ENCODE measurements at regions of chr2 and their contacts with region 1.

Region 1: DNA sequence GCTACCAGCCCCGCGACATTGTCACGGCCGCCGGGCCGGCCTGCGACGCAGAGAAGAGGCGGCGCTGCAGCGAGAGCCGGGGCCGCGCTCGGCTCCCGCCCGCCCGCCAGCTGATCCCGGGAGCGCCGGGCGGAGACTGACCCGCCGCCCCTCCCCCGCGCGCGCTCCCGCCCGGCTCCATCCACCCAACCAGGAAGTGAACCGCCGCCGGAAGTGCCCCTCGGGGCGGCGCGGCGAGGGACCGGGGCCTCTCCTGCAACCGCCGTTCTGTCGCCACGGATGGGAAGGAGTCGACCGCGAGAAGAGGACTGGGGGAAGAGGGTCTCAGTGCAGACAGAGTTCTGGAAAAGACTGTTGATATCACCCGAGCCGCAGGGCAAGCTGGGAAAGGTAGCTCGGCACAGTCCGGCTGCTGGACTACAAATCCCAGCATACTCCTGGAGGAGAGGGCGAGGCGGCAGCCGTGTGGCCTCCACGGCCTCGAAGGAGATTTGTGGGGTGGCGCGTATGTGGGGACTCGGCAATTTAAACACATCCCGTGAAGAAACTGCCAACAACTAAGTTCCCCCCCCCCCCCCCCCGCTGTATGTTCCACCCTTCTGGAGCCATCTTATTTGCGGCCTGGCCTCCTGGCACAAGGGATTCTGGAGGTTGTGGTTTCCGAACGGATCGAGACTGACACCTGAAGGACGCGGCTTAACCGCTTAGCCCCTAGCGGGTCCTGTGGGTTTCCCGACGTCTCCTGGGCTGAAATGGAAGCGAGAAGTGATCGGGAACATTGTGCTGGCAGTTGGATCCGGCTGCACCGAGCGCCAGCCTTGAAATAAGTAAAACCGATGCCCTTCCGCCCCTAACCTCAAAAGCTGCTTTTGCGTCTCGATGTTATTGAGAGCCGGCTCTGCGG is at the start of gene AAK1:
- DNase-seq: peak; percentile 93 to 95 (median 94)
- ATAC-seq: peak; percentile 80 to 95 (median 92)
- H3K4me3 ChIP-seq: peak within 1 kb of the TSS; percentile 70 to 99 (median 95)
- H3K27ac ChIP-seq: peak within 1 kb of the TSS; percentile 93 to 99 (median 98)
- H3K4me1 ChIP-seq: peaks cover 0 to 71% (median 40%) of the 10 kb centered on the region in 12 donors
- H3K27me3 ChIP-seq: no peaks in the 10 kb centered on the region
- CTCF ChIP-seq: peak in 1 of 12 donors; percentile 7
- POLR2A ChIP-seq: peak in 1 of 2 donors; percentile 85
- total RNA-seq, gene AAK1: 68.7 to 167 (median 131) TPM

Region 2: DNA sequence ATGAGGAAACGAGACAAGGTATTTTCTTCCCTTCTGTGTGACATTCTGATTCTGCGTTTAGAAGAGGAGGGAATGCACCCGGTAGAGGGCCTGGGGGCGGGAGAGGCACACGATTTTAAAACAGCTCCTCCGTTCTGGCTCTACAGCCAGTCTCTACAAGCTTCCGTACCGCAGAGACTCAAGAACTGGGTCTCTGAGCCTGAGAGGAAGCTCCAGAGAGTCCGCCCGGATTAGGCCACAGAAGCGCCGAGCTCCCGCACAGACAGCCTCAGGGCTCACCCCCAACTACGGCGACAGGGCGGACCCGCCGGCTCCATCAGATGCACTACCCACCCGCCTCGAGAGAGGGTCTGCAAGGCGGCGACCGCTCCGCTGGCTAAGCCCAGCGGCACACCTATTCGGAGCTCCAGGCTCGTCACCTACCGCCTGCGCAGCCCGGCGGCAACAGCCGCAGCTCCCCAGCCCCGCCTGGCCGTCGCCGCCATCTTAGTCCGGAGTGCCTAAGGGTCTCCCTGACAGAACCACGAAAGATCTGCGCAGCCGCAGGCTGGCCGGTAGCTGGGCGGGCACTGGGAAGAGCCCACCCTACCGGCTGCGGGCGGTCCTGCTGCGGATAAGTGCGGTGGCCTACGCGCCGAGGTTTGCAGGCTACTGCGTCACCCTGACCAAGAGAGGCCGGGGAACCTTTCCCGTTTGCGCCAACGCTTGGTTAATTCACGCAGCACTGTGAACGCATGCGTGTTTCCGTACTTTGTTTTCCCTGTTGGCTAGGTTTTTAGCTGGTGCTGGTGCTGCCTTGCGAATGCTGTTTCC is 206.7 kb before region 1 on chr2 and contains the start of gene NFU1:
- intact Hi-C with region 1: loop called in 1 of 10 experiments (anchors 5 kb)
- DNase-seq: peak; percentile 94 to 97 (median 96)
- ATAC-seq: peak; percentile 97 to 99 (median 98)
- H3K4me3 ChIP-seq: peak within 1 kb of the TSS; percentile 70 to 97 (median 84)
- H3K27ac ChIP-seq: peak within 1 kb of the TSS; percentile 84 to 99 (median 96)
- H3K4me1 ChIP-seq: peaks cover 5 to 37% (median 21%) of the 10 kb centered on the region in 12 donors
- H3K27me3 ChIP-seq: no peaks in the 10 kb centered on the region
- CTCF ChIP-seq: peak; percentile 62 to 82 (median 75)
- POLR2A ChIP-seq: peak in 1 of 2 donors; percentile 84
- total RNA-seq, gene NFU1: 76.6 to 144 (median 110) TPM

Region 3: GRCh38 chr2:69565431-69565839 is 78.4 kb before region 1 on chr2:
- intact Hi-C with region 1: loop called in 8 of 10 experiments (anchors 2 to 10 kb)
- DNase-seq: peak; percentile 30 to 71 (median 44)
- ATAC-seq: peak in 3 of 4 donors; percentile 14 to 66 (median 35)
- H3K4me3 ChIP-seq: no peak overlapping the region
- H3K27ac ChIP-seq: peak overlapping the region in 1 of 12 donors; percentile 47
- H3K4me1 ChIP-seq: peaks cover 2 to 86% (median 50%) of the 10 kb centered on the region in 12 donors
- H3K27me3 ChIP-seq: no peaks in the 10 kb centered on the region
- CTCF ChIP-seq: peak; percentile 55 to 84 (median 72)
- POLR2A ChIP-seq: no peak

Region 4: DNA sequence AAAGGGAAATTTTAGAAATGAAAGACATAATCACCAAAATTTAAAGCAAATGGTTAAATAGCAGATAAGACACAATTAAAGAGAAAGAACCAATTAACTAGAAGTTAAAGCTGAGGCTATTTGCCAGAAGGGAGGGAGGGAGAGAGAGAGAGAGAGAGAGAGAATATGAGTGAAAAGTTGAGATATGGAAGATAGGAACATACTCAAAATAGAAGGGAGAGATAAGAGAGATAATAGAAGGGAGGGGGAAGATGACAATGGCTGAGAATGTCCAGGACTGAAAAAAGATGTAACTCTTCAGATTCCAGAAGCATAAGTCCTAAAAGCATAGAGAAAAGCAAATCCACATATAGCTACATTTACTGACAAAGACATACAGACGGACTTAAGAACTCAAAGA is 16.8 kb after region 1 on chr2:
- intact Hi-C with region 1: loop called in 1 of 10 experiments (anchors 2 kb)
- DNase-seq: no peak
- ATAC-seq: no peak
- H3K4me3 ChIP-seq: no peak overlapping the region
- H3K27ac ChIP-seq: peak overlapping the region in 7 of 12 donors; percentile 5 to 59 (median 37)
- H3K4me1 ChIP-seq: peaks cover 0 to 21% (median 7%) of the 10 kb centered on the region in 12 donors
- H3K27me3 ChIP-seq: no peaks in the 10 kb centered on the region
- CTCF ChIP-seq: no peak
- POLR2A ChIP-seq: no peak

Region 5: DNA sequence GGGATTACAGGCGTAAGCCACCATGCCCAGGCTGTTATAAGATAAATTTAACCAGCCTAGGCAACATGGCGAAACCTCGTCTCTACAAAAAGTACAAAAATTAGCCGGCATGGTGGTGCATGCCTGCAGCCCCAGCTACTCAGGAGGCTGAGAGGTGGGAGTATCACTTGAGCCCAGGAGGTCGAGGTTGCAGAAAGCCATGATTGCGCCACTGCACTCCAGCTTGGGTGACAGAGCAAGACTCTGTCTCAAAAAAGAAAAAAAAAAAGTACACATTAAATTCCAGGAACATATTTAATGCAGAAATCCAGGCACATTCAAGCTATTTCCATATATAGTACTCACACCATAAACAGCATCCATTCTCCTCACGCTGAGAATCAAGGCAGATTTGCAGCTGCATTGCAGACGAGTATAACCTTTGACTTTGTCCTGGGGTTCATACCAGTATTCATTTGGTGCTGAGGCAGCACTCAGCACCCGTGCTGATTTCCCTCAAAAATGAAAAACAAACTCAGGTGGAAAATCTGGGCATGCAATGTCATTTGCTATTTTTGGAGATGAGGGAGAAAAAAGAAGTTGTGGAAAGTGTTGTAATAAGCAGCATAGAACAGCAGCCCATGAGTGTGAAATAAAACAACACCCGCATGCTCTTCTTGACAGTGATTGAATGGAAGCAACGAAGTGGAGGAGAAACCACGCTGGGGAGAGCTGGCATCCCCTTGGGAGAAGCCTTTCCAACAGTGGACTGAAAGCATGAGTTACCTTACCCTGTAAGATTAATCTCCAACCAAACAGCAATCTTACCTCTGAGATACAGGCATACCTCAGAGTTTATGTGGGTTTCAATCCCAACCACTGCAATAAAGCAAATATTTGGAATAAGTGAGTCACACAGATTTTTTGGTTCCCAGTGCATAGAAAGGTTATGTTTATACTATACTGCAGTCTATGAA is 51.3 kb after region 1 on chr2:
- intact Hi-C with region 1: loop called in 1 of 10 experiments (anchors 10 kb)
- DNase-seq: no peak
- ATAC-seq: peak in 2 of 4 donors; percentile 29 to 37
- H3K4me3 ChIP-seq: no peak overlapping the region
- H3K27ac ChIP-seq: no peak overlapping the region
- H3K4me1 ChIP-seq: peaks cover 0 to 43% (median 8%) of the 10 kb centered on the region in 12 donors
- H3K27me3 ChIP-seq: no peaks in the 10 kb centered on the region
- CTCF ChIP-seq: no peak
- POLR2A ChIP-seq: no peak